Sciatic nerve (tissue), 2 donors: ENCODE measurements at regions of chr18 and their contacts with region 1.

Region 1: GRCh38 chr18:1438458-1438910 is 533.8 kb downstream of the ADCYAP1 start:
- DNase-seq: no peak
- ATAC-seq: no peak

Region 2: DNA sequence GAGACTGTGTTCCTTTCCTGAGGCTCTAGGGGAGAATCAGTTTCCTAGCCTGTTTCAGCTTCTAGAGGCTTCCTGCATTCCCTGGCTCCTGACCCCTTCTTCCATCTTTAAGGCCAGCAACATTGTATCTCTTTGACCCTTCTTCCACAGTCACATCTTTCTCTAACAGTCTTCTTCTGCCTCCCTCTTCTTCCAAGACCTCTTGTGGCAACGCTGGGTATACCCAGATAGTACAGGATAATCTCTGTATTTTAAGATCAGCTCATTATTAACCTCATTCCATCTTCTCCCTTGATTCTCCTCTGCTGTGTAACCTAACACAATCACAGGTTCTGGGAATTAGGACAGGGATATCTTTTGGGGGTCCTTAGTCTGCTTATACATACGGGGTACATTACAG is 1800.3 kb after region 1 on chr18:
- intact Hi-C with region 1: loop called (anchors 5 kb)
- DNase-seq: no peak
- ATAC-seq: no peak